Body of pancreas (tissue), 4 donors: ENCODE measurements at regions of chr11 and their contacts with region 1.

Region 1: DNA sequence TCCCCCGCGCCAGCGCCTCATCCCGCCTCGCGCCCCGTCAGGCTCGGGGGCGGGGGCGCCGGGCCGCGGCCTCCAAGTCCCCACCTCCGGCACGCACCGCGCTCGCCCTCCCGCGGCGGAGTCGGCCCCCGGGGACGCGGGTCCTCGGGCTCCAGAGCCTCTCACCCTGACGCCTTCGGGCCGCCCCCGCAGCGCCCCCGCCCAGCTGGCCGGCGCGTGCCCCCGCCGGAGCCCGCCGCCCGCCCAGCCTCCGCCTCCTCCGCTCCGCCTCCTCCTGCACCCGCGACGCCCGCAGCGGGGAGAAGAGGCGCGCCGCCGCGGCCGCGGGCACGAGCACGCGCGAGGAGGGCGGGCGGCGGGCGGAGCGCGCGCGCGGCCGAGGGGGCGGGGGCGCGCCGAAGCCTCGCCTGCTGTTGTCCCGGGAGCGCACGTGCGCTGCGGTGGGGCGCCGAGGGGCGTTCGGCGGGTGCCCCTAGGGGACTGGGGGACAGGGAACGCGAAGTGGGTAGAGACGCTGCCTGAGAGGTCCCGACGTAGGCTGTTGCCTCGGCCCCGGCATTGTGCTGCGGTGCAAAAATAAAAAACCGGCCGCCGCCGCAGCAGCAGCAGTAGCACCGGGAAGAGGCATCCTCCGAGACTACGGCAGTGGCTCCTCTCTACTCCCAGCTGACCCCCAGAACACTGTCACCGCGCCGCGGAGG is 87.4 kb upstream of the ARHGAP32 start:
- DNase-seq: peak; percentile 79 to 86 (median 82)
- ATAC-seq: peak; percentile 90
- H3K4me3 ChIP-seq: peak overlapping the region; percentile 13 to 61
- H3K27ac ChIP-seq: peak overlapping the region; percentile 34 to 62 (median 46)
- H3K4me1 ChIP-seq: peaks cover 62% of the 10 kb centered on the region
- H3K27me3 ChIP-seq: no peaks in the 10 kb centered on the region
- CTCF ChIP-seq: peak in 1 of 7 experiments; percentile 44
- POLR2A ChIP-seq: peak in 2 of 3 donors; percentile 54 to 55

Region 2: GRCh38 chr11:128437137-128437536 is 842.3 kb before region 1 on chr11:
- intact Hi-C with region 1: no loop called
- DNase-seq: no peak
- ATAC-seq: no peak
- H3K4me3 ChIP-seq: no peak overlapping the region
- H3K27ac ChIP-seq: no peak overlapping the region
- H3K4me1 ChIP-seq: no peaks in the 10 kb centered on the region
- H3K27me3 ChIP-seq: no peaks in the 10 kb centered on the region
- CTCF ChIP-seq: no peak
- POLR2A ChIP-seq: no peak

Region 3: GRCh38 chr11:129155745-129156144 is 123.7 kb before region 1 on chr11:
- intact Hi-C with region 1: no loop called
- DNase-seq: no peak
- ATAC-seq: no peak
- H3K4me3 ChIP-seq: no peak overlapping the region
- H3K27ac ChIP-seq: no peak overlapping the region
- H3K4me1 ChIP-seq: no peaks in the 10 kb centered on the region
- H3K27me3 ChIP-seq: no peaks in the 10 kb centered on the region
- CTCF ChIP-seq: no peak
- POLR2A ChIP-seq: no peak

Region 4: GRCh38 chr11:129323896-129324512 is 44.5 kb after region 1 on chr11:
- intact Hi-C with region 1: loop called (anchors 10 kb)
- DNase-seq: peak; percentile 66 to 85 (median 70)
- ATAC-seq: peak; percentile 90
- H3K4me3 ChIP-seq: no peak overlapping the region
- H3K27ac ChIP-seq: peak overlapping the region; percentile 60 to 83 (median 76)
- H3K4me1 ChIP-seq: peaks cover 47% of the 10 kb centered on the region
- H3K27me3 ChIP-seq: no peaks in the 10 kb centered on the region
- CTCF ChIP-seq: no peak
- POLR2A ChIP-seq: peak in 2 of 3 donors; percentile 31 to 45

Region 5: DNA sequence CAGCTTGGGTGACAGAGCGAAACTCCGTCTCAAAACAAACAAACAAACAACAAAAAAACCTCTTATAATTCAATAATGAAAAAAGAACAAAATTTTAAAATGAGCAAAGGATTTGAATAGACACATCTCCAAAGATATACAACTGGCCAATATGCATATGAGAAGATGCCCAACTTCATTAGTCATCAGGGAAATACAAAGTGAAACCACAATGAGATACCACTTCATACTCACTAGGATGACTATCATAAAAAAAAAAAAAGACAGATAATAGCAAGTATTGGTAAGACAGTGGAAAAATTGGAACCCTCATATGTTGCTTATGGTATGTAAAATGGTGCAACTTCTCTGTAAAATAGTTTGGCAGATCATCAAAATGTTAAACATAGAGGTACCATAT is 67.4 kb after region 1 on chr11:
- intact Hi-C with region 1: no loop called
- DNase-seq: no peak
- ATAC-seq: no peak
- H3K4me3 ChIP-seq: no peak overlapping the region
- H3K27ac ChIP-seq: no peak overlapping the region
- H3K4me1 ChIP-seq: no peaks in the 10 kb centered on the region
- H3K27me3 ChIP-seq: no peaks in the 10 kb centered on the region
- CTCF ChIP-seq: no peak
- POLR2A ChIP-seq: no peak